HCT116 (cell line): ENCODE measurements at regions of chr15 and their contacts with region 1.

Region 1: DNA sequence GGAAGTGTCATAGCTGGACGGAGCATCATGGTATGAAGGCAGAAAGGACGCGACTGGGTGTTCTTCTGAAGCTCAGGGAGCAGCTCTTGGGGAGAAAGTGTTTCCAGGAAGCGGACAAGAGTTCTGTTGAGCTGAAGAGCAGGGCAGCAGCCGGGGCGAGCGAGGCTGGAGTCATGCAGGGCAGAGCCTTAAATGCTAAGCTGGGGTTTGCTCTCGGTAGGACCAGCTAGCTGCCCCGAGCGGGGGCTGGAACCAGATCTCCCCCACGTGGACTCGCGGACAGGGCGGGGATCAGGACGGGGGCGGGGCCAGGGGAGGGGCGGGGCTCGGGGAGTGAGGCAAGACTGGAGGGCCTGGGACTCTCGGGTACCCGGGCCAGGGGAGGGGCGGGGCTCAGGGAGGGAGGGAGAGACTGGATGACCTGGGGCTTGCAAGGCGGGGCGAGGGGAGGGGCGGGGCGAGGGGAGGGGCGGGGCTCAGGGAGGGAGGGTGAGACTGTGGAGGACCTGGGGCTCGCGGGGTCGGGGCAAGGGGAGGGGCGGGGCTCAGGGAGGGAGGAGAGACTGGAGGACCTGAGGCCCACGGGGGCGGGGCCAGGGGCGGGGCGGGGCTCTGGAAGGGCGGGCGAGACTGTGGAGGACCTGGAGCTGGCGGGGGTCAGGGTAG is 486 bp upstream of the FAH start:
- DNase-seq: peak; percentile 88
- ATAC-seq: peak; percentile 87
- H3K4me3 ChIP-seq: peak overlapping the region; percentile 60 to 74
- H3K27ac ChIP-seq: no peak overlapping the region
- H3K4me1 ChIP-seq: peaks cover 12 to 25% of the 10 kb centered on the region in 2 experiments; a peak in 3 of 4 replicates
- H3K27me3 ChIP-seq: no peaks in the 10 kb centered on the region
- CTCF ChIP-seq: no peak
- POLR2A ChIP-seq: no peak
- RAD21 ChIP-seq: no peak

Region 2: GRCh38 chr15:80072285-80072994 is 79.9 kb before region 1 on chr15:
- CTCF ChIA-PET with region 1: no interaction called
- POLR2A ChIA-PET with region 1: no interaction called
- RAD21 ChIA-PET with region 1: no interaction called
- intact Hi-C with region 1: loop called (anchors 5 kb)
- DNase-seq: peak; percentile 87
- ATAC-seq: peak; percentile 100
- H3K4me3 ChIP-seq: peak overlapping the region; percentile 52 to 61
- H3K27ac ChIP-seq: no peak overlapping the region
- H3K4me1 ChIP-seq: peaks cover 4 to 23% of the 10 kb centered on the region in 2 experiments
- H3K27me3 ChIP-seq: no peaks in the 10 kb centered on the region
- CTCF ChIP-seq: no peak
- POLR2A ChIP-seq: no peak
- RAD21 ChIP-seq: no peak

Region 3: DNA sequence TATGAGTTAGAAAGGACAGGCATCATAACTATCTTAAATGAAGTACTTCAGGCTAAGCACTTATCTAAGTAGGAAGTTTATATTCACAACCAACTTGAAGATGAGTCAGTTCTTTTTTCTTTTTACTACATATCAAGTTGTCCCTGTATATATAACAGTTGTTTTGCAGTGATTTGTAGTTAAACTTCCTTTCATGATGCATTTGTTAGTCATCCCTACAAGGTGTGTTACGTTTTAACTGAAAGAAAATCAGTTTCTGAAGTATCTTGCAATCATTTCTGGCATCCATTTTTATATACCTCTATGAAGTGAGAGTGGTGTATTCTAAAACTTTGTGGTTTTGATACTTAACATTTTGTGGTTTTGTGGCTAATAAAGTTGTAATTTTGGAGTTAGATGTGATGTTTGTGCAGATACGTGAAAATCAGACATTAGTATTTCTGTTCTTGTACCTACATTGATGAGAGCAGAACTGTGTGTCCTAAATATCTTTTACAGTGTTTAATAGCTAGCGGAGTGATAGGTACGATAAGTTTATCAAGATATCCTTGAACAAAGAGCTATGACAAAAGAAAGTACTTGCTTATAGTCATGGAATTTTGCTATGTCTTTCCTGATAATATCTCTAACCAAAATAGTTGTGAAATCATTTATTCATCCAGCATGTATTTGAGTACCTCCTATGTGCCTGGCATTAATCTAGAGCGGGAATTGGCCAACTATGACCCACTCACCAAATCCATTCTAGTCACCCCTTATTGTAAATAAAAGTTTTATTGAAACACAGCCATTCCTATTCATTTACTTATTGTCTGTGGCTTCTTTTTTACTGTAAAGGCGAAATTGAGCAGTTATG is 46.5 kb before region 1 on chr15:
- CTCF ChIA-PET with region 1: no interaction called
- POLR2A ChIA-PET with region 1: no interaction called
- RAD21 ChIA-PET with region 1: no interaction called
- intact Hi-C with region 1: no loop called
- DNase-seq: no peak
- ATAC-seq: 0 out of 2 replicates have a peak, but pooled peaks have one; percentile 20
- H3K4me3 ChIP-seq: no peak overlapping the region
- H3K27ac ChIP-seq: no peak overlapping the region
- H3K4me1 ChIP-seq: peaks cover 0 to 13% of the 10 kb centered on the region in 2 experiments; a peak in 2 of 4 replicates
- H3K27me3 ChIP-seq: no peaks in the 10 kb centered on the region
- CTCF ChIP-seq: no peak
- POLR2A ChIP-seq: no peak
- RAD21 ChIP-seq: no peak

Region 4: GRCh38 chr15:80127911-80128310 is 24.4 kb before region 1 on chr15:
- CTCF ChIA-PET with region 1: no interaction called
- POLR2A ChIA-PET with region 1: no interaction called
- RAD21 ChIA-PET with region 1: no interaction called
- intact Hi-C with region 1: no loop called
- DNase-seq: no peak
- ATAC-seq: no peak
- H3K4me3 ChIP-seq: no peak overlapping the region
- H3K27ac ChIP-seq: no peak overlapping the region
- H3K4me1 ChIP-seq: no peaks in the 10 kb centered on the region
- H3K27me3 ChIP-seq: no peaks in the 10 kb centered on the region
- CTCF ChIP-seq: no peak
- POLR2A ChIP-seq: no peak
- RAD21 ChIP-seq: no peak

Region 5: GRCh38 chr15:80251428-80252120 is 99.3 kb after region 1 on chr15:
- CTCF ChIA-PET with region 1: no interaction called
- POLR2A ChIA-PET with region 1: no interaction called
- RAD21 ChIA-PET with region 1: no interaction called
- intact Hi-C with region 1: no loop called
- DNase-seq: no peak
- ATAC-seq: no peak
- H3K4me3 ChIP-seq: no peak overlapping the region
- H3K27ac ChIP-seq: no peak overlapping the region
- H3K4me1 ChIP-seq: no peaks in the 10 kb centered on the region
- H3K27me3 ChIP-seq: peaks cover 63% of the 10 kb centered on the region
- CTCF ChIP-seq: no peak
- POLR2A ChIP-seq: no peak
- RAD21 ChIP-seq: no peak